ENCODE measurements at regions of chr9 and their contacts with region 1.

Region 1: DNA sequence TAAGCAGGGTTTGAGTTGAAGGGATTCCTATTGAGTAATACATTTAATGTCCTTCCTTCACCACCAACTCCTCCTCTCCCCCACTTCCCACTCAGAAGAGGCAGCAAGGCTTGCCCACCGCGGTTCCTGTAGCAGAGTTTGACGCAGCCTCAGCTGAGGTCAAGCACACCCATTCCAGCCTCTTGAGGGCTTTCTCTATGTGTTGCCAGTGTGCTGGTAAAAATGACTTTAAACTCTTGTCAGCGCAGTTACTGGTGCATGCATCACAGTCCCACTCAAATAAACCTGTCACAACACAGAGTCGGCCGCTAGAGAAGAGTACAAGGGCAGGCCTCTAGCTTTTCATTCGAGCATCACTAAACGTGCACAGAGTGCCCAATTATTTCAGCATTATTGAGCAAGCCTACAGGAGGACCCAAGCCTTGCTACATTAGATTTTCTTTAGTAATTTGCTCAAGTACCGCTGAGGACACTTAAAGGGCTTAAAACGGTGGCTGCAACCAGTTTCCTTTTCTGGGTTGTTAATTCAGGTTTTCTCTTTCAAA is 79.6 kb downstream of the TLE4 start:
- DNase-seq: no peak
- H3K4me3 ChIP-seq: no peak overlapping the region
- H3K27ac ChIP-seq: no peak overlapping the region
- H3K4me1 ChIP-seq: no peaks in the 10 kb centered on the region
- H3K27me3 ChIP-seq: no peaks in the 10 kb centered on the region
- CTCF ChIP-seq: no peak
- EP300 ChIP-seq: no peak
- POLR2A ChIP-seq: no peak

Region 2: DNA sequence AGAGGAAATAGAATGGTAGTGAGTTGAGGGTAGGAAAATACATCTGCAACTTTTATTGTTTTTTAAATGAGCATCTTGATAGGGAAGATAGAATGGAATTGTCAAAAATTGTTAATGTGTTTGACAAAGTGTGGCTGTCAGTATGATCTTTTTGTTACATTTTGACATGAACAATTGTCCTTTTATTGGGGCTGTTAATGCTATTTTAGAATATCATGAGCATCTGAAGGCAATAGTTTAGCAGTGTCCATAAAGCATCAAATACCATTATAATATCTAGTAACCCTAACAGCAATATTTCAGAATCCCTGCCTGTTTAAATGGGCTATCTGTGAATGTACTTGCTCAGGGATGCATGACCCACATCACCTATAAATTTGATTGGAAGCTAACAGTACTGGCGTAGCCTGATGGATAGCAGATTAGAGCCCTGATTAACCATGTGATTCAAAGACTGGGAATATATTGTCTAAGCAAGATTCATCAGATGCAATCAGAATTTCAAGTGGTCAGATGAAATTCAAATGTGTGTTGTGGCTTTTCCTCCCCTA is 41.8 kb before region 1 on chr9:
- intact Hi-C with region 1: loop called in 1 of 4 experiments (anchors 2 kb)
- DNase-seq: no peak
- H3K4me3 ChIP-seq: no peak overlapping the region
- H3K27ac ChIP-seq: no peak overlapping the region
- H3K4me1 ChIP-seq: peaks cover 16% of the 10 kb centered on the region
- H3K27me3 ChIP-seq: no peaks in the 10 kb centered on the region
- CTCF ChIP-seq: no peak
- EP300 ChIP-seq: no peak
- POLR2A ChIP-seq: no peak